CD8-positive, alpha-beta T cell (primary cell): ENCODE measurements at regions of chr2 and their contacts with region 1.

Region 1: GRCh38 chr2:32516567-32516966 is 111.3 kb upstream of the TTC27 start:
- DNase-seq: no peak
- ATAC-seq: no peak
- H3K4me3 ChIP-seq: no peak overlapping the region
- H3K4me3 Mint-ChIP-seq: no peak overlapping the region
- H3K27ac ChIP-seq: no peak overlapping the region
- H3K27ac Mint-ChIP-seq: no peak overlapping the region
- H3K4me1 ChIP-seq: no peaks in the 10 kb centered on the region
- H3K4me1 Mint-ChIP-seq: no peaks in the 10 kb centered on the region
- H3K27me3 ChIP-seq: no peaks in the 10 kb centered on the region
- H3K27me3 Mint-ChIP-seq: no peaks in the 10 kb centered on the region
- CTCF ChIP-seq: no peak

Region 2: GRCh38 chr2:31694444-31694843 is 822.1 kb before region 1 on chr2:
- CTCF ChIA-PET with region 1: no interaction called
- POLR2A ChIA-PET with region 1: no interaction called
- intact Hi-C with region 1: no loop called
- DNase-seq: no peak
- ATAC-seq: no peak
- H3K4me3 ChIP-seq: no peak overlapping the region
- H3K4me3 Mint-ChIP-seq: no peak overlapping the region
- H3K27ac ChIP-seq: no peak overlapping the region
- H3K27ac Mint-ChIP-seq: no peak overlapping the region
- H3K4me1 ChIP-seq: no peaks in the 10 kb centered on the region
- H3K4me1 Mint-ChIP-seq: no peaks in the 10 kb centered on the region
- H3K27me3 ChIP-seq: no peaks in the 10 kb centered on the region
- H3K27me3 Mint-ChIP-seq: no peaks in the 10 kb centered on the region
- CTCF ChIP-seq: no peak

Region 3: GRCh38 chr2:32478889-32479623 is 37.5 kb before region 1 on chr2:
- CTCF ChIA-PET with region 1: no interaction called
- POLR2A ChIA-PET with region 1: no interaction called
- intact Hi-C with region 1: loop called in 1 of 2 experiments (anchors 2 kb)
- DNase-seq: no peak
- ATAC-seq: no peak
- H3K4me3 ChIP-seq: no peak overlapping the region
- H3K4me3 Mint-ChIP-seq: no peak overlapping the region
- H3K27ac ChIP-seq: no peak overlapping the region
- H3K27ac Mint-ChIP-seq: no peak overlapping the region
- H3K4me1 ChIP-seq: no peaks in the 10 kb centered on the region
- H3K4me1 Mint-ChIP-seq: no peaks in the 10 kb centered on the region
- H3K27me3 ChIP-seq: no peaks in the 10 kb centered on the region
- H3K27me3 Mint-ChIP-seq: no peaks in the 10 kb centered on the region
- CTCF ChIP-seq: no peak